Activated CD4-positive, alpha-beta T cell treated with anti-CD3 and anti-CD28 coated beads, Interleukin-2, amount 10 ng/mL, durations not matched to agents 7 days and 5 days (primary cell): ENCODE measurements at regions of chr11 and their contacts with region 1.

Region 1: GRCh38 chr11:8688414-8689362 is 6.1 kb downstream of the RPL27A start:
- DNase-seq: peak; percentile 86
- H3K4me3 Mint-ChIP-seq: peak overlapping the region; percentile 87
- H3K27ac Mint-ChIP-seq: peak overlapping the region; percentile 95
- H3K4me1 Mint-ChIP-seq: peaks cover 65% of the 10 kb centered on the region
- H3K27me3 Mint-ChIP-seq: no peaks in the 10 kb centered on the region

Region 2: DNA sequence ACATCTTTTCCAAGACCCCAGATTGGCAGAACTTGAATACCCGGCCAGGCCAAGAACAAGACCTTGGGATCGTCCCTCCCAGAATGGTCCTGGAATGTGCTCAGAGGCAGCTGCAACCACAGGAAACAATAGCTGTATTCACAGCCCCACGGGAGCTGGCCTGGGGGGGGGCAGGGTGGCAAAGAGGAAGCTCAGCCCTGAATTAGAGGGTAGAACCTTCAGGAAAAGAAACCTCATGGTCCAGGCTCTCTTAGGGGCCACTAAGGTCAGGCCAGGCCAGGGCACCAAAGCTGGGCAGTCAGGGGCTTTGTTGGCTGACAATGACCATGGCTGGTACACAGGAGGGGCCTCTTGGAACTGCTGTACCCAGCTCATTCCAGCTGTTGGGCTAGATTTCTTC is 11.2 kb after region 1 on chr11:
- CTCF ChIA-PET with region 1: interaction called, 12 read pairs
- POLR2A ChIA-PET with region 1: no interaction called
- DNase-seq: no peak
- H3K4me3 Mint-ChIP-seq: no peak overlapping the region
- H3K27ac Mint-ChIP-seq: no peak overlapping the region
- H3K4me1 Mint-ChIP-seq: peaks cover under 1% of the 10 kb centered on the region
- H3K27me3 Mint-ChIP-seq: no peaks in the 10 kb centered on the region